HepG2 (cell line): ENCODE measurements at regions of chr6 and their contacts with region 1.

Region 1: GRCh38 chr6:85323435-85324040 is 126.3 kb upstream of the NT5E start:
- DNase-seq: peak; percentile 72
- ATAC-seq: peak; percentile 96
- H3K4me3 ChIP-seq: no peak overlapping the region
- H3K27ac ChIP-seq: no peak overlapping the region
- H3K4me1 ChIP-seq: no peaks in the 10 kb centered on the region
- H3K27me3 ChIP-seq: peaks cover 0 to 4% of the 10 kb centered on the region in 2 experiments; a peak in 1 of 5 replicates
- CTCF ChIP-seq: peak; percentile 88
- EP300 ChIP-seq: no peak
- POLR2A ChIP-seq: no peak
- RAD21 ChIP-seq: peak; percentile 61; the same call in 1 of the 2 replicates

Region 2: GRCh38 chr6:83884523-83884922 is 1439.0 kb before region 1 on chr6:
- CTCF ChIA-PET with region 1: no interaction called
- POLR2A ChIA-PET with region 1: no interaction called
- in situ Hi-C with region 1: no loop called
- intact Hi-C with region 1: loop called (anchors 10 kb)
- DNase-seq: peak; percentile 27
- ATAC-seq: peak; percentile 55; the same call in 2 of the 3 replicates
- H3K4me3 ChIP-seq: no peak overlapping the region
- H3K27ac ChIP-seq: no peak overlapping the region
- H3K4me1 ChIP-seq: peaks cover 4% of the 10 kb centered on the region
- H3K27me3 ChIP-seq: no peaks in the 10 kb centered on the region
- CTCF ChIP-seq: peak; percentile 82
- EP300 ChIP-seq: no peak
- POLR2A ChIP-seq: no peak
- RAD21 ChIP-seq: peak; percentile 64

Region 3: GRCh38 chr6:84422380-84422968 is 901.1 kb before region 1 on chr6:
- CTCF ChIA-PET with region 1: interaction called, 4 read pairs
- POLR2A ChIA-PET with region 1: no interaction called
- in situ Hi-C with region 1: loop called (anchors 10 kb)
- intact Hi-C with region 1: loop called (anchors 1 kb)
- DNase-seq: peak; percentile 16
- ATAC-seq: peak; percentile 97
- H3K4me3 ChIP-seq: no peak overlapping the region
- H3K27ac ChIP-seq: no peak overlapping the region
- H3K4me1 ChIP-seq: no peaks in the 10 kb centered on the region
- H3K27me3 ChIP-seq: no peaks in the 10 kb centered on the region; a peak in 1 of 5 replicates
- CTCF ChIP-seq: peak; percentile 74
- EP300 ChIP-seq: no peak
- POLR2A ChIP-seq: no peak
- RAD21 ChIP-seq: peak; percentile 42; the same call in 1 of the 2 replicates

Region 4: DNA sequence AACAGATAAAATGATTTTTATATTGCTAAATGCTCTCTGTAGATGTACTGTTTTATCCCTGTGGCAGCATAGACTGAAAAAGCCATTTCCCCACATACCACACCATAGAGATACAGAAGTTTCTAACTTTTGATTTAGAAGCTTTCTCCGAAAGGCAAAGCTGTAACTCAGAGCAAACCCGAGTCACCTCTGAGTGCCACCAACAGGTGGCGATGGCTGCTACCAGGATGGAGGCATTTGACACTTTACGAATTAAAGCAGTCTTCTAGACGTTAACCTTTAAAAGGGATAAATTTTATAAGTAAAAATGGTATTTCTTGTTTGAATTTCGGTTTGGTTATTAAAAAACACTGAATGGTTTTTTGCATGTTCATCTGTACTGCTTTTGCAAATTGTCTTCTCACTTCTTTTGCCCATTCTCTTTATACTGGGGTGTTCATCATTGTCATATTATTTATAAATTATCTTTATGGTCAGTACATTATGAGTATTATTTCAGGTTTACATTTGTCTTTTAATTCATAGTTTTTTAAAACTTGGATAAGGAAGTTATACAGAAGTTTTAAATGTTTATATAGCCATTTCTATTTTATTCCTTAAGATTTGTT is 895.1 kb before region 1 on chr6:
- CTCF ChIA-PET with region 1: interaction called, 3 read pairs
- POLR2A ChIA-PET with region 1: no interaction called
- in situ Hi-C with region 1: loop called (anchors 10 kb)
- intact Hi-C with region 1: loop called (anchors 1 kb)
- DNase-seq: peak; percentile 16
- ATAC-seq: peak; percentile 72
- H3K4me3 ChIP-seq: no peak overlapping the region
- H3K27ac ChIP-seq: no peak overlapping the region
- H3K4me1 ChIP-seq: no peaks in the 10 kb centered on the region
- H3K27me3 ChIP-seq: no peaks in the 10 kb centered on the region; a peak in 1 of 5 replicates
- CTCF ChIP-seq: peak; percentile 70
- EP300 ChIP-seq: no peak
- POLR2A ChIP-seq: no peak
- RAD21 ChIP-seq: peak; percentile 36; the same call in 1 of the 2 replicates

Region 5: DNA sequence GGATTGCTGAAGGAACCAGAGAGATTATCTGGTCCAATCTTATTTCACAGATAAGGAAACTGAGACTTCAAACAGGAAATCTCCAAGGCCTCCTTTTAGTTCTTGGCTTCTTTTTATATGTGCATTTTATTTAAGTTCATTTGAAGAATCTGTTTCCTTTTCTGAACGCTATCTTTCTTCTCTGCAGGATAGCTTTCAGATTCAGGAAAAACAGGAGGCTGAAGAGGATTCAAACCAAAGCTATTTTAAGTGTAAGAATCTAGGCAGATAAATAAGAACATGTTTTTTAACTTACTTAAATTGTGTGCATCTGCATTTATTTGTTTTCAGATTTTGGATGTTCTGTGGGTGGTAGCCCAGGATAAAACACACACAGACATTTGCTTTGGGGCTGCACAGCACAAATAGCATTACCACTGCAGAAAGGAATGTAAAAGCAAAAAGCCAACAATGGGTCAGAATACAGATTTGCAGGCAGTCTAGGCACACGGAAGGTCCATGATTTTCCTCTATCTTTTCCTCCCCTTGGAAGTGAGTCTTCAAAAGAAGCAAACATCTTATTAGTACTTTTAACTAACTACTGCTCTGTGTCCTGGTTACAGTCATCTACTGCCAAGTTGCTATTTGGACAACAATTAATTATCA is 370.3 kb before region 1 on chr6:
- CTCF ChIA-PET with region 1: no interaction called
- POLR2A ChIA-PET with region 1: no interaction called
- in situ Hi-C with region 1: no loop called
- intact Hi-C with region 1: no loop called
- DNase-seq: no peak
- ATAC-seq: no peak
- H3K4me3 ChIP-seq: no peak overlapping the region
- H3K27ac ChIP-seq: no peak overlapping the region
- H3K4me1 ChIP-seq: no peaks in the 10 kb centered on the region
- H3K27me3 ChIP-seq: no peaks in the 10 kb centered on the region
- CTCF ChIP-seq: no peak
- EP300 ChIP-seq: no peak
- POLR2A ChIP-seq: no peak
- RAD21 ChIP-seq: no peak

Region 6: GRCh38 chr6:84967389-84967788 is 356.1 kb before region 1 on chr6:
- CTCF ChIA-PET with region 1: no interaction called
- POLR2A ChIA-PET with region 1: no interaction called
- in situ Hi-C with region 1: no loop called
- intact Hi-C with region 1: loop called (anchors 5 kb)
- DNase-seq: peak; percentile 52
- ATAC-seq: peak; percentile 86
- H3K4me3 ChIP-seq: no peak overlapping the region
- H3K27ac ChIP-seq: no peak overlapping the region
- H3K4me1 ChIP-seq: no peaks in the 10 kb centered on the region
- H3K27me3 ChIP-seq: peaks cover 0 to 3% of the 10 kb centered on the region in 2 experiments; a peak in 1 of 5 replicates
- CTCF ChIP-seq: peak; percentile 77
- EP300 ChIP-seq: no peak
- POLR2A ChIP-seq: no peak
- RAD21 ChIP-seq: peak; percentile 57

Region 7: DNA sequence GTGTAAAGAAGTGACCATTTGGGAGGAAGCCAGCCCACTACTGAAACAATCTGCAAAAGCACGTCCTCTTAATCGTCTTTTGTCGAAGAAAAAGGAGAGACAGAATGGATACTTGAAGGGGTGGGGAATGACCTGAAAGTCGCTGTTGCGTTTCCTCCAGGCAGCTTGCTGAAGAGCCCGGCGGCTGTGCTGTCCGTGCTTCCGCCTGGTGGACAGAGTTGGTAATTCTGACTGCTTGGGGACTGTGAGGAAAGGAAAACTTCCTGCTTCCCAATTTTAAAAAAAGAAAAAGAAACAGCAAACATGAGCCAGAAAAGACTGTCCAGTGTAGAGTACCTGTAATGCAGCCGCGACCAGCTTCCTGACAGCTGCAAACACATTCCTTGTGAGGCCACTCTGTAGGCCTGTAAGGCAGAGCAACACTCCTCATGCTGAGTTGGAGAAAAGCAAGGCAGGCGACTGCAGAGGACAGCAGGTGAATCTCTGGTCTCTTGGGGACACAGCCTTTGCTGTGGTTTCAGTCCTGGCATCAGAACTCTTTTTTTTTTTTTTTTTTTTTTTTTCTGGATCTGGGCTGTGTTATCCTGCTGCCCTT is 308.0 kb before region 1 on chr6:
- CTCF ChIA-PET with region 1: interaction called, 4 read pairs
- POLR2A ChIA-PET with region 1: no interaction called
- in situ Hi-C with region 1: loop called (anchors 25 kb)
- intact Hi-C with region 1: loop called (anchors 2 kb)
- DNase-seq: peak; percentile 26
- ATAC-seq: peak; percentile 99
- H3K4me3 ChIP-seq: no peak overlapping the region
- H3K27ac ChIP-seq: no peak overlapping the region
- H3K4me1 ChIP-seq: no peaks in the 10 kb centered on the region
- H3K27me3 ChIP-seq: 0 out of 5 replicates have a peak, but pooled peaks cover 0 to 6% of the 10 kb centered on the region in 2 experiments
- CTCF ChIP-seq: peak; percentile 54
- EP300 ChIP-seq: no peak
- POLR2A ChIP-seq: no peak
- RAD21 ChIP-seq: 0 out of 2 replicates have a peak, but pooled peaks have one; percentile 22

Region 8: GRCh38 chr6:85126485-85127167 is 196.9 kb before region 1 on chr6:
- CTCF ChIA-PET with region 1: no interaction called
- POLR2A ChIA-PET with region 1: no interaction called
- in situ Hi-C with region 1: no loop called
- intact Hi-C with region 1: loop called (anchors 5 kb)
- DNase-seq: peak; percentile 52
- ATAC-seq: peak; percentile 100
- H3K4me3 ChIP-seq: no peak overlapping the region; a peak in 1 of 6 replicates
- H3K27ac ChIP-seq: no peak overlapping the region
- H3K4me1 ChIP-seq: no peaks in the 10 kb centered on the region
- H3K27me3 ChIP-seq: no peaks in the 10 kb centered on the region
- CTCF ChIP-seq: peak; percentile 90
- EP300 ChIP-seq: no peak
- POLR2A ChIP-seq: no peak
- RAD21 ChIP-seq: peak; percentile 73